PC-3 (cell line): ENCODE measurements at regions of chr12 and their contacts with region 1.

Region 1: GRCh38 chr12:54935235-54935951 is 49.2 kb downstream of the TESPA1 start:
- DNase-seq: peak; percentile 94
- ATAC-seq: peak; percentile 76
- H3K4me3 ChIP-seq: no peak overlapping the region
- H3K27ac ChIP-seq: peak overlapping the region; percentile 96
- H3K4me1 ChIP-seq: peaks cover 59% of the 10 kb centered on the region
- H3K27me3 ChIP-seq: no peaks in the 10 kb centered on the region
- CTCF ChIP-seq: peak; percentile 35; the same call in 1 of the 2 replicates

Region 2: DNA sequence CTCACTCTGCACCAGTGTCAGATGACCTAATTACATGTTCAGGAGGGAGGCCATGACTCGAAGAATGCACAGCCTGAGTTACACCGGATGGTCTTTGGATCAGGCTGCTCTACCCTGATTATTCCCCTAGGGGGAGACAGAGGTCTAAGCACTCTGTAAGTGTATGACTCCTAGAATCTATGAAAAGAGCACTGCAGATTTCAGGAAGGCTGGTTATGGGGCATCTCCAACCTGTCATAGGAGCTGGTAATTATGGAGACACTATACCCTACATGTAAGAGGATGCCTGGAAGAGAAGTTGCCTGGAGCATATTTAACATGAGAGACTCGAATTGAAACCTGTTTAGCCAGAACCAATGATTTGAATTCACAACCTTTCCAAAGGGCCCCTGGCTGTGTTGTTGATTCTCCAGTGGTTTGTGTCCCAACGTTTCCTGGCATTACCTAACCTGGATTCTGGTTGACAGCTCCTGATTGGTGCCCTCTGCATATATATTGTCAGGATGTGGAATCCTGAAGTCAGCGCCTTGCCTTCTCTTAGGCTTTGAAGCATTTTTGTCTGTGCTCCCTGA is 81.3 kb before region 1 on chr12 and contains the start of gene MUCL1:
- CTCF ChIA-PET with region 1: interaction called, 5 read pairs
- POLR2A ChIA-PET with region 1: no interaction called
- intact Hi-C with region 1: loop called (anchors 1 kb)
- DNase-seq: peak; percentile 93
- ATAC-seq: peak; percentile 99
- H3K4me3 ChIP-seq: no peak within 1 kb of the TSS
- H3K27ac ChIP-seq: no peak within 1 kb of the TSS
- H3K4me1 ChIP-seq: no peaks in the 10 kb centered on the region
- H3K27me3 ChIP-seq: 0 out of 2 replicates have a peak, but pooled peaks cover under 1% of the 10 kb centered on the region
- CTCF ChIP-seq: peak; percentile 97
- total RNA-seq, gene MUCL1: not detected in 2 replicates

Region 3: GRCh38 chr12:54870604-54871003 is 64.8 kb before region 1 on chr12:
- CTCF ChIA-PET with region 1: no interaction called
- POLR2A ChIA-PET with region 1: no interaction called
- intact Hi-C with region 1: loop called (anchors 5 kb)
- DNase-seq: peak; percentile 77
- ATAC-seq: peak; percentile 99
- H3K4me3 ChIP-seq: no peak overlapping the region
- H3K27ac ChIP-seq: no peak overlapping the region
- H3K4me1 ChIP-seq: peaks cover 15% of the 10 kb centered on the region
- H3K27me3 ChIP-seq: no peaks in the 10 kb centered on the region
- CTCF ChIP-seq: no peak

Region 4: GRCh38 chr12:54891717-54892554 is 43.5 kb before region 1 on chr12:
- CTCF ChIA-PET with region 1: no interaction called
- POLR2A ChIA-PET with region 1: no interaction called
- intact Hi-C with region 1: loop called (anchors 1 kb)
- DNase-seq: peak; percentile 96
- ATAC-seq: peak; percentile 99
- H3K4me3 ChIP-seq: no peak overlapping the region
- H3K27ac ChIP-seq: peak overlapping the region; percentile 57
- H3K4me1 ChIP-seq: peaks cover 21% of the 10 kb centered on the region
- H3K27me3 ChIP-seq: no peaks in the 10 kb centered on the region
- CTCF ChIP-seq: no peak

Region 5: DNA sequence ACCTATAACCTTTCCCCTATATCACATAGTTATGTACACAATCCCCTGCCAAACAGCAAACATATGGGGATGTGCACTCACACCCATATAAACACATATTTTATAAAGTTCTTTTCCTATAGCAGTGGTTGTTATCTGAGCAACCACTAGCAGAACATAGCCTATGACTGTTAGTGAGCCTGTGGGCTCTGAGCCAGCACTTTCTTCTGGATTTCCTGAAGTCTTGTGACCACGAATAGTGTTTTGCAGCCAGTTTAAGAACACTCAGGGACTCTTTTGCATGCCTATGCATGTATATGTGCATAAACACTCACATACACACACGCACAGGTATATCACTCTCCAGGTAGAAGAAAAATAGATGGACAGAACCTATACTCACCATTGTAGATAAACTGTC is 32.1 kb after region 1 on chr12:
- CTCF ChIA-PET with region 1: no interaction called
- POLR2A ChIA-PET with region 1: no interaction called
- intact Hi-C with region 1: no loop called
- DNase-seq: no peak
- ATAC-seq: no peak
- H3K4me3 ChIP-seq: no peak overlapping the region
- H3K27ac ChIP-seq: no peak overlapping the region
- H3K4me1 ChIP-seq: no peaks in the 10 kb centered on the region
- H3K27me3 ChIP-seq: peaks cover 86% of the 10 kb centered on the region
- CTCF ChIP-seq: no peak

Region 6: GRCh38 chr12:54984658-54985376 is 49.4 kb after region 1 on chr12 and contains the start of gene TESPA1:
- CTCF ChIA-PET with region 1: no interaction called
- POLR2A ChIA-PET with region 1: no interaction called
- intact Hi-C with region 1: no loop called
- DNase-seq: no peak
- ATAC-seq: no peak
- H3K4me3 ChIP-seq: no peak within 1 kb of the TSS
- H3K27ac ChIP-seq: no peak within 1 kb of the TSS
- H3K4me1 ChIP-seq: no peaks in the 10 kb centered on the region
- H3K27me3 ChIP-seq: peaks cover 89% of the 10 kb centered on the region
- CTCF ChIP-seq: no peak
- total RNA-seq, gene TESPA1: not detected in 2 replicates